ENCODE measurements at regions of chr16 and their contacts with region 1.

Region 1: DNA sequence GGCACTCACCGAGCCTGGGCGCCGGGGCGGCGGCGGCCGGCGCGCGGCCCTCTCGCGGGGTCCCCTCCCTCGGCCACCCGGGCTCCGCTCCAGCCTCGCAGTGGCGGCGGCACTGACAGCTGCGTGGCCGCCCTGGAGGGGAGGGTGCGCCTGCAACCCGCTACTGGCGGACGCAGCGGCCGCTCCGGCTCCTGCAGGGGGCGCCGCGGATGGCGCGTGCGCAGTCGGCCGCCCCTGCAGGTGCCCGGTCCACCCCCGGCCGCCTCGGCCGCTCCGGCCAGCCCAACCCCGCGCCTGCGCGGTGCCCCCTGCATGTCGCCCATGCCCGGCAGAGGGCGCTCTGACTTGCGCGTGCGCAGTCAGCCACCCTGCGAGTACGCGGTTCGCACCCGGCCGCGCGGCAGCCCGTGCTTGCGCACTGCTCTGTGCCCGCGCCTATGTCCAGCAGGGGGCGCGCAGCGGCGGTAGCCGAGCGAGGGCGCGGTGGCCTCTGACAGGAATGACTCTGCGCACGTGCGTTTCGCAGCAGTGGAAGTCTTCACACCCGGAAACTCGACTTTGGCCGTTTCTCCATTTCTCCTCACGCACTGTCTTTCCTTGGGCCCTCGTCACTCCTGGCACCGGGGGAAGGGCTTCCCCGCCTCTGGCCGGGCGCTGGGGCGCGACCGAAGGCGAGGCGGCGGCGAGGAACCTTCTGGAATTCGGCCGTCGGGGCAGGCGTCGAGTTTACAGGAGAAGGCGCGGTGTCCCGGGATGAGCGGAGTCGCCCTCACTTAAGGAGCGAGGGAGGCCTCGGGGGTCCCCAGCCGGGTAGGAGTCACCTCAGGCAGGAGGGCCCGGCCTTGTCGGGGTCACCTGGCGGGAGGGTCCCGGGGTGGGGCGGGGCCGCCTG is at the start of gene ABCA3:
- DNase-seq: peak; percentile 93 to 98 (median 97)
- ATAC-seq: peak; percentile 95
- H3K4me3 ChIP-seq: peak within 1 kb of the TSS; percentile 74
- H3K27ac ChIP-seq: no peak within 1 kb of the TSS
- H3K4me1 ChIP-seq: no peaks in the 10 kb centered on the region
- H3K27me3 ChIP-seq: no peaks in the 10 kb centered on the region
- total RNA-seq, gene ABCA3: 7.7 to 11.3 (median 8.5) TPM

Region 2: GRCh38 chr16:2388875-2389433 is 48.1 kb after region 1 on chr16:
- intact Hi-C with region 1: no loop called
- DNase-seq: peak in 1 of 3 donors; percentile 48
- ATAC-seq: peak in 1 of 2 donors; percentile 48
- H3K4me3 ChIP-seq: no peak overlapping the region
- H3K27ac ChIP-seq: no peak overlapping the region
- H3K4me1 ChIP-seq: no peaks in the 10 kb centered on the region
- H3K27me3 ChIP-seq: no peaks in the 10 kb centered on the region

Region 3: GRCh38 chr16:2422123-2422867 is 81.5 kb after region 1 on chr16:
- intact Hi-C with region 1: loop called in 2 of 4 experiments (anchors 5 kb)
- DNase-seq: peak in 1 of 3 donors; percentile 23
- ATAC-seq: no peak
- H3K4me3 ChIP-seq: no peak overlapping the region
- H3K27ac ChIP-seq: no peak overlapping the region
- H3K4me1 ChIP-seq: no peaks in the 10 kb centered on the region
- H3K27me3 ChIP-seq: no peaks in the 10 kb centered on the region

Region 4: DNA sequence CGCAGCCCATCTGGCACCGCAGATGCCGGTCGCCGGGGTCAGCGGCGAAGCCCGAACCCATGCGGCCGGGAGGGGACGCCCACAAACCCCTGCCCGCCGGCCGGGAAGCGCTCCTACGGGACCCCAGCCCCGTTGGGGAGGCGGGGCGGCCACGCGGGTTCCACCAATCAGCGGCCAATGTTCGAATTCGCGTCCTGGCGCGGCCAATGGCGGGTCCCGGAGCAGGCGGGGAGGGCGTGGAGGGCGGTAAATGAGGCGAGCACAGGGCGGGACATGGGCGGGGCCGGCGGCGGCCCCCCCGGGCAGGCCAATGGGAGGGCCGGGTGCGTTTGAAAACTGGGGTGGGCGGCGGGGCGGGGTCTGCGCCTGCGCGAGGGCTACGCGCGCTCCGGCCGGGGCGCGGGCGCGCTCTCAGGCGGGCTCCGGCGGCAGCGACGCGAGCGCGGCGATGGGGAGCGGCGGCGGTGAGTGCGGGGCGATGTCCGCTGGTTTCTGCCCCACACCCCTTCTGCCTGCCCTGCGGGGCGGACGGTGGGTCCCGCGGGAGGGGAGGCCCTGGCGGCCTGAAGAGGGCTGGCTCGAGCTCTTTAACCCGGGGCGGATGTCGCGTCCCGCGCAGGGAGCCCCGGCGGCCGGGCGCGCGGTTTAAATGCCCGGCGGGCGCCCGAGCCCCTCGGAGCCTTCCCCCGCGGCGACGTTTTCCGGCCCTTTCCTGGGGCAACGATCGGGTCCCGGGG is 88.4 kb after region 1 on chr16 and contains the start of gene CCNF:
- intact Hi-C with region 1: loop called in 2 of 4 experiments (anchors 5 kb)
- DNase-seq: peak; percentile 98 to 99 (median 99)
- ATAC-seq: peak; percentile 99
- H3K4me3 ChIP-seq: peak within 1 kb of the TSS; percentile 72
- H3K27ac ChIP-seq: peak within 1 kb of the TSS; percentile 34
- H3K4me1 ChIP-seq: peaks cover 4% of the 10 kb centered on the region
- H3K27me3 ChIP-seq: no peaks in the 10 kb centered on the region
- total RNA-seq, gene CCNF: 0.78 to 1.9 (median 1.5) TPM

Region 5: GRCh38 chr16:2500918-2501750 is 160.3 kb after region 1 on chr16:
- intact Hi-C with region 1: loop called in 3 of 4 experiments (anchors 2 to 10 kb)
- DNase-seq: peak; percentile 81 to 95 (median 94)
- ATAC-seq: peak; percentile 82 to 84
- H3K4me3 ChIP-seq: no peak overlapping the region
- H3K27ac ChIP-seq: no peak overlapping the region
- H3K4me1 ChIP-seq: peaks cover 12% of the 10 kb centered on the region
- H3K27me3 ChIP-seq: no peaks in the 10 kb centered on the region

Measured in right cardiac atrium (tissue), 5 donors.